Activated CD8-positive, alpha-beta memory T cell treated with anti-CD3 and anti-CD28 coated beads, Interleukin-2, amount 10 ng/mL, durations not matched to agents 7 days and 5 days (primary cell): ENCODE measurements at regions of chr3 and their contacts with region 1.

Region 1: GRCh38 chr3:183385698-183386613 is 42.5 kb downstream of the MCF2L2 start:
- DNase-seq: peak; percentile 66
- ATAC-seq: peak; percentile 78
- H3K4me3 Mint-ChIP-seq: no peak overlapping the region
- H3K27ac Mint-ChIP-seq: no peak overlapping the region
- H3K4me1 Mint-ChIP-seq: peaks cover 2% of the 10 kb centered on the region
- H3K27me3 Mint-ChIP-seq: no peaks in the 10 kb centered on the region

Region 2: DNA sequence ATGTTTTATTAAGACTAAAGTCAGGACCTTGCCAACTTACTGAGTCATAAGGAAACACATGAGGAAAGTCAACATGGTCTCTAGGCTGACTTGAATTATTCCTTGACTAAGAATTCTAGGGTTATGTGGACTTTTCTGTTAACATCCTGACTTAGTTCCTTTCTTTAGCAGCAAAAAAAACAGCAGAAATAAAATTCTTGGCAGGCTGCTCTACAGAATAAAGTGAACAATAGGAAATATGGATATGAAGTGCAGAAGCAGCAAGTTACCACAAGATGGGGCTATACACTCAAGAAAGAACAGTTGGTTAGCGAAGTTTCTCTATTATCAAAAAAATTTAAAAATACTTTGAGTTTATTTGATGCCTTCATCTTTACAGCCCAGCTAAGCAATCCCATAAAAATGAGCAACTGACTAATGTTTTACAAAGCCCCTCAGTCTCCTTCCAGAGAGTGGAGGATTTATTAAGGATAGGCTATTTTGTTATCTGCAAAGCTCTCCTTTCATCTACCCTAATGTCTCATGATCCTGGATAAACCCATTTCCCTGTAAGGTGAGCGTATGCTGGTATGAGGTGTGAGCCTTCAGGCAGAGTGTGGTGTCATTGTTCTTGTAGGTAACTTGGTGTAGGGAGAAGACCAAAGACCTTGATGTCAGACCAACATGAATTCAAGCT is 263.6 kb before region 1 on chr3:
- CTCF ChIA-PET with region 1: interaction called, 29 read pairs
- DNase-seq: no peak
- ATAC-seq: peak; percentile 27
- H3K4me3 Mint-ChIP-seq: no peak overlapping the region
- H3K27ac Mint-ChIP-seq: no peak overlapping the region
- H3K4me1 Mint-ChIP-seq: no peaks in the 10 kb centered on the region
- H3K27me3 Mint-ChIP-seq: peaks cover 5% of the 10 kb centered on the region

Region 3: GRCh38 chr3:183188895-183189462 is 197.0 kb before region 1 on chr3:
- CTCF ChIA-PET with region 1: interaction called, 102 read pairs
- DNase-seq: peak; percentile 53
- ATAC-seq: peak; percentile 36
- H3K4me3 Mint-ChIP-seq: no peak overlapping the region
- H3K27ac Mint-ChIP-seq: no peak overlapping the region
- H3K4me1 Mint-ChIP-seq: peaks cover 13% of the 10 kb centered on the region
- H3K27me3 Mint-ChIP-seq: no peaks in the 10 kb centered on the region

Region 4: GRCh38 chr3:183275418-183275817 is 110.5 kb before region 1 on chr3:
- CTCF ChIA-PET with region 1: no interaction called
- DNase-seq: no peak
- ATAC-seq: no peak
- H3K4me3 Mint-ChIP-seq: no peak overlapping the region
- H3K27ac Mint-ChIP-seq: no peak overlapping the region
- H3K4me1 Mint-ChIP-seq: peaks cover 1% of the 10 kb centered on the region
- H3K27me3 Mint-ChIP-seq: no peaks in the 10 kb centered on the region

Region 5: DNA sequence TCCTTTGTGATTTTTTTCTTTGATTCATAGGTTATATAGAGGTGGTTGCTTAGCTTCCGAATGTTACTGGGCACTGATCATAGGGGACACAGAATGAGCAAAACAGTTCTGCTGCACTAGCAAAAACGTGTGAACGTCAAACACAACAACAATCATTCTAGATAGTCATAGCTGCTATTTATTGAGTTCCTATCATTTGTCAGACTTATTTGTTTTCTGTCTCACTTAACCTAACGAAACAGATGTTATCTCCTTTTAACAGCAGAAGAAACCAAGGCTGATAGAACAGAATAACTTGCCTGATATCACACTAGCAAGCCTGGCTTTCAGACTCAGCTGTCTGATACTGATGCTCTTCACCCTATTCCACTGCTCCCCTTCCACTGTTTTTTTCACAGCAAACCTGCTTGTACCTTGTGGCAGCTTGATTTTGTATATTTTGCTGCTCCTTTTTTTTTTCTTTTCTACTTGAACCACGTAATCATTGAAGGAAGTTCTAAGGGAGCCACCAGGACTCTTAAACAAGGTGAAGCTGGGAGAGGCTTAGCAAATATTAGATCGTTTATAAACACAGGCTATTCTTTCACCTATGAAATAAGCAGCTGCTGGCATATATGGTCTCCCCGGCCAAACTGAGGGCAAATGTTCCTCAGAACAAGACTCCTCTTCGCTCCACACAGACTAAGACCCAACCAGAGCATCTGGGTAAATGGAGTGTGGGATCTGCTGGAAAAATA is 36.4 kb before region 1 on chr3:
- CTCF ChIA-PET with region 1: no interaction called
- DNase-seq: no peak
- ATAC-seq: peak; percentile 53
- H3K4me3 Mint-ChIP-seq: no peak overlapping the region
- H3K27ac Mint-ChIP-seq: peak overlapping the region; percentile 17
- H3K4me1 Mint-ChIP-seq: peaks cover 16% of the 10 kb centered on the region
- H3K27me3 Mint-ChIP-seq: peaks cover 5% of the 10 kb centered on the region

Region 6: GRCh38 chr3:183396662-183397391 is 10.9 kb after region 1 on chr3:
- CTCF ChIA-PET with region 1: interaction called, 13 read pairs
- DNase-seq: no peak
- ATAC-seq: no peak
- H3K4me3 Mint-ChIP-seq: no peak overlapping the region
- H3K27ac Mint-ChIP-seq: no peak overlapping the region
- H3K4me1 Mint-ChIP-seq: peaks cover 5% of the 10 kb centered on the region
- H3K27me3 Mint-ChIP-seq: no peaks in the 10 kb centered on the region

Region 7: DNA sequence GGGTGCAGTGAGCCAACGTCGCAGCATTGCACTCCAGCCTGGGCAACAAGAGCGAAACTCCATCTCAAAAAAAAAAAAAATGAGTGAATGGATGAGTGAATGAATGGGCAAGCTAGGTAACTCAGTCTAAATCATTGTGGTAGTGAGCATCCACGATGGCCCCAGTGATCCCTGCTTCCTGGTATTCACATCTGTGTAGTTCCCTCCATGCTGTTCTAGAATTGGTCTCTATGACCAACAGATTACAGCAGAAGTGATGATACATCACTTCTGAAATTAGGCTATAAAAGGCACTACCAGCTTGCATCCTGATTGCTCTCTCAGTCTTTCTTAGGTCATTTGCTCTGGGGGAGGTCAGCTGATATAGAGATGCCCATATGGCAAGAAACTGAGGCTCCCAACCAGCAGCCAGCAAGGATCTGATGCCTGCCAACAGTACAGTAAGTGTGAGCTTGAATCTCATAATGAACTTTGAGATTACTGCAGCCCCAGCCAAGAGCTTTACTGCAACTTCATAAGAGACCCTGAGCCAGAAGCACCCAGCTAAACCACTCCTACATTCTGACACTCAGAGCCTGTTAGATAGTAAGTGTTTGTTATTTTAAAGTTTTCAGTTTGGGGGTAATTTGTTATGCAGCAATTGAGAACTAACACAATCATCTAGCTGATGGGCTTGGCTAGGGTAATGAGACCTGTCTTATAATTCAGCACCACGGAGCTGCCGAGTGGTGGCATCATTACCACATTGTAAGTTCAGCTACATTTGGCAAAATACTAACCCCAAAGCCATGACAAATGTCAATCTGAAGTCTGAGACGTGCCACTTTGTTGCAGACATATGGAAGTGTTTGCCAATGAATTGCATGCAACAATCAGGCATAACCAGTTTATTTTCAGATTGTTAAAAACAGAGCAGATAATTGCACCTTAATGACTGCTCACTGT is 116.6 kb after region 1 on chr3:
- CTCF ChIA-PET with region 1: no interaction called
- DNase-seq: peak; percentile 27
- ATAC-seq: no peak
- H3K4me3 Mint-ChIP-seq: no peak overlapping the region
- H3K27ac Mint-ChIP-seq: no peak overlapping the region
- H3K4me1 Mint-ChIP-seq: peaks cover 7% of the 10 kb centered on the region
- H3K27me3 Mint-ChIP-seq: no peaks in the 10 kb centered on the region

Region 8: DNA sequence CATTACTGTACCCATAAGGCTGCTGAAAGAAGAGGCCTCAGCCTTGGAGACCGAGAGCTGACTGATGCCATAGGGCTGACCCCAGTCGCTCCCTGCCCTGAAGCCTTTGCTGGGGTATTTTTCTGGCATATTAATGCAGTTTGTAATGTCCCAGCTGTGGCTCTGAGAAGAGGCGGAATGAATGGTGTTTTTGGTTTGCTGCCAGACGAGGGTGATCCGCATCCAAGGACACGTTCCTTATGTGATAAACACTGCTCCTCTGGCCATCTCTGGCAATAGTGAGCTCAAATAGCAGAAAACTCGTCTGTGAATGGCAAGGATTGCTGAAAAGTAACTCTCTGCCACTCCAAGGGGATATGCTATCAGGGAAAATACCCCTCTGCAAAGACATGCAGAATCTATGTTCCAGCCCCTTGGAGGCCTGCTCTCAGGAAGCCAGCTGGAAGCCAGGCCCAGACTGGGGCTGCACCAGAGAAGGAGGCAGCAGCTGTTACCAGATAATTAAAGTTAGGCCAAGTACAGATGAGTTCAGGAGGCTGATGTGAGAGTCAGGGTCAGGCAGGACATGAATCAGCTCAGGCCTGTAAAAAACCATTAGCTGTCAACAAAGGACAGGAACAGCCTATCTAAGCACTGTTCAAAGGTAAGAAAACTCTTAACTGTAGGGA is 198.4 kb after region 1 on chr3:
- CTCF ChIA-PET with region 1: no interaction called
- DNase-seq: no peak
- ATAC-seq: no peak
- H3K4me3 Mint-ChIP-seq: no peak overlapping the region
- H3K27ac Mint-ChIP-seq: no peak overlapping the region
- H3K4me1 Mint-ChIP-seq: peaks cover 18% of the 10 kb centered on the region
- H3K27me3 Mint-ChIP-seq: peaks cover 4% of the 10 kb centered on the region